ENCODE measurements at regions of chr3 and their contacts with region 1.

Region 1: GRCh38 chr3:98817547-98818041 is 54.5 kb downstream of the ST3GAL6 start:
- DNase-seq: no peak
- ATAC-seq: peak; percentile 85

Region 2: GRCh38 chr3:98994128-98994762 is 176.7 kb after region 1 on chr3:
- intact Hi-C with region 1: loop called (anchors 2 kb)
- DNase-seq: no peak
- ATAC-seq: peak; percentile 60

Region 3: DNA sequence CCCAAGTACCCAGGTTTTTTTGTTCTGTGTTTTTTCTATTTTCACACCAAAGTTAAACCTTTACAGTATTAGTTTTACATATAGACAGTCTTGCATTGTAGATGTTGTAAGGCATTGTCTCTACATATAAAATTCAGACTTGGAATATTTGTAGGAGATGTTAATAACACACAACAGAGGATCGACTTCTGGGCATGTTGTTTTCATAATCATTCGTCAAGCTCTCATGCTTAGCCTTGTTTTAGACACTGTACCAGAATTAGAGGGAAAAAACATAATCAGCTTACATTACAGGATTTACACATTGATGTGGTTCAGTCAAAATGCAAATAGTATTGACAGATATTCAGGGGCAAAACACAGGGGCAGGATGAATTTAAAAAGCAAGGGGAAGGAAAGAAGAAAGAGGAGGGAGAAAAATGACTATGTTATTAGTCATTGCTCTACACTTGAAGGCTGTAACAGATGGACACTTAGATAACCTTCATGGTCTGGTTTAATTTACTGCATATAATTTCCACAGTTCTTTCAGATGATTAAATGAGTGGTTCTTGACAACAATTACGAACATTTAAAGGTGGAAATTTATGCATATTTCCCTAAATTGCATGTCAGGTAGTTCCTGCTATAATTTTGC is 1007.5 kb after region 1 on chr3:
- intact Hi-C with region 1: no loop called
- DNase-seq: no peak
- ATAC-seq: no peak

Measured in Right ventricle myocardium superior (tissue), 1 donor.